Body of pancreas (tissue), 4 donors: ENCODE measurements at regions of chr22 and their contacts with region 1.

Region 1: DNA sequence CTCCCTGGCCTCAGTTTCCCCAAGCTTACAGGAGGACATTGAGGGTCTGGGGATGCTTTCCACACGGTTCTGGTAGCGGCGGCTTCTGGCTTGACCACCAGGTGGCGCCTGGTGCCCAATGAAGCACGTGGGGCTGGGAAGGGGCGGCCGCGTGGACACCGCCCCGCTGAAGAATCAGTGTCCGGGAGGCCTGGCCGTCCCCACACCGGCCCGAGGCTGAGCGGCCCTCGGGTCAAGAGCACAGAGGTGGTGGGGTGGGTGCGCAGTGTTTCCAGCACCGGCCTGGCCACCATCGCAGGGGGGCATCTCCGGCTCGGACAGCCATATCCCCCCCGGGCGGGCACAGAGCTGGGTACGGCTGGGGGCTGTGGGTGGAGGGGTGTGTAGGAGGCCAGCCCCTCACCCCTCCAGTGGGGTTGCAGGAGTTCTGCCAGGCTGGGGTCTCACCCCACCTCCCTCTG is 27.8 kb upstream of the PPARA start:
- DNase-seq: peak; percentile 71 to 80 (median 77)
- ATAC-seq: peak; percentile 63
- H3K4me3 ChIP-seq: no peak overlapping the region
- H3K27ac ChIP-seq: no peak overlapping the region
- H3K4me1 ChIP-seq: peaks cover 10% of the 10 kb centered on the region
- H3K27me3 ChIP-seq: no peaks in the 10 kb centered on the region
- CTCF ChIP-seq: peak; percentile 84 to 95 (median 90)
- POLR2A ChIP-seq: no peak

Region 2: GRCh38 chr22:46071451-46072109 is 51.0 kb before region 1 on chr22:
- intact Hi-C with region 1: no loop called
- DNase-seq: peak; percentile 93 to 95 (median 94)
- ATAC-seq: peak; percentile 59
- H3K4me3 ChIP-seq: peak overlapping the region in 1 of 2 donors; percentile 67
- H3K27ac ChIP-seq: peak overlapping the region; percentile 98 to 100 (median 99)
- H3K4me1 ChIP-seq: peaks cover 49% of the 10 kb centered on the region
- H3K27me3 ChIP-seq: no peaks in the 10 kb centered on the region
- CTCF ChIP-seq: no peak
- POLR2A ChIP-seq: peak; percentile 59 to 69 (median 65)

Region 3: GRCh38 chr22:46309526-46310085 is 187.1 kb after region 1 on chr22:
- intact Hi-C with region 1: loop called (anchors 5 kb)
- DNase-seq: no peak
- ATAC-seq: no peak
- H3K4me3 ChIP-seq: no peak overlapping the region
- H3K27ac ChIP-seq: no peak overlapping the region
- H3K4me1 ChIP-seq: no peaks in the 10 kb centered on the region
- H3K27me3 ChIP-seq: no peaks in the 10 kb centered on the region
- CTCF ChIP-seq: no peak
- POLR2A ChIP-seq: no peak